Sigmoid colon (tissue), 7 donors: ENCODE measurements at regions of chr19 and their contacts with region 1.

Region 1: GRCh38 chr19:53792721-53793433 is 31.2 kb downstream of the NLRP12 start:
- DNase-seq: peak; percentile 84
- H3K4me3 ChIP-seq: no peak overlapping the region
- H3K27ac ChIP-seq: no peak overlapping the region
- H3K4me1 ChIP-seq: no peaks in the 10 kb centered on the region
- H3K27me3 ChIP-seq: no peaks in the 10 kb centered on the region
- CTCF ChIP-seq: peak; percentile 68 to 96 (median 89)
- EP300 ChIP-seq: no peak
- POLR2A ChIP-seq: no peak

Region 2: GRCh38 chr19:53844849-53845246 is 52.0 kb after region 1 on chr19:
- intact Hi-C with region 1: no loop called
- DNase-seq: no peak
- H3K4me3 ChIP-seq: no peak overlapping the region
- H3K27ac ChIP-seq: no peak overlapping the region
- H3K4me1 ChIP-seq: peaks cover 0 to 8% (median 3%) of the 10 kb centered on the region in 4 donors
- H3K27me3 ChIP-seq: peaks cover 0 to 17% (median 0%) of the 10 kb centered on the region in 3 donors
- CTCF ChIP-seq: no peak
- EP300 ChIP-seq: no peak
- POLR2A ChIP-seq: no peak

Region 3: GRCh38 chr19:54029930-54030490 is 237.1 kb after region 1 on chr19:
- intact Hi-C with region 1: loop called (anchors 5 kb)
- DNase-seq: no peak
- H3K4me3 ChIP-seq: no peak overlapping the region
- H3K27ac ChIP-seq: no peak overlapping the region
- H3K4me1 ChIP-seq: no peaks in the 10 kb centered on the region
- H3K27me3 ChIP-seq: peaks cover 0 to 49% (median 0%) of the 10 kb centered on the region in 3 donors
- CTCF ChIP-seq: peak in 3 of 4 experiments; percentile 15 to 57 (median 28)
- EP300 ChIP-seq: no peak
- POLR2A ChIP-seq: no peak